Mammary epithelial cell (primary cell): ENCODE measurements at regions of chr10 and their contacts with region 1.

Region 1: GRCh38 chr10:72048450-72049124 is 39.8 kb downstream of the SPOCK2 start:
- DNase-seq: peak; percentile 85
- H3K4me3 ChIP-seq: no peak overlapping the region
- H3K27ac ChIP-seq: no peak overlapping the region
- H3K4me1 ChIP-seq: peaks cover 17% of the 10 kb centered on the region
- H3K27me3 ChIP-seq: no peaks in the 10 kb centered on the region
- CTCF ChIP-seq: peak; percentile 99 to 100

Region 2: DNA sequence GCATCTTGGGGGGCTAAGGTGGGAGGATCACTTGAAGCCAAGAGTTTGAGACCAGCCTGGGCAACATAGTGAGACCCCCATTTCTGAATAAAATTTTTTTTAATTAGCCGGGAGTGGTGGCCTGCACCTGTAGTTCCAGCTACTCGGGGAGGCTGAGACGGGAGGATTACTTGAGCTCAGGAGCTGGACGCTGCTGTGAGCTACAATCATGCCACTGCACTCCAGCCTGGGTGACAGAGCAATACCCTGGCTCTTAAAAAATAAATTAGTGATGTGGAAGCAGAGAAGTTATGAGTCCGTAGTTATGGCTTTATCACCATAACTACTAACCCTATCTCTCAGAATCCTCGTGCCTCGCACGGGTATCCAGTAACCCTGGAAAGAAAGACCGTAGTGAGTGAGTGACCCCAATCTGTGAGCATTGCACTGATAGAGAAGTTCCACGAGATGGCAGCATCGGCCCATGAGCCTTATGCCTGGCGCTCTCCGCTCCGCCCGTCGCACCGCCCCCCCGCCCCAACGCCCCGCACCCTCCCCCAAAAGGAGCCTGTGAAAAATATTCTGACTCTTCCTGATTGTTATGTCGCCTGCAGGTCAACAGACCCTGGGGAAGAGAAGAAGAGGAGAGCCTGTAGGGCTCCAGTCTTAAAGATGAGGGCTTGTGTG is 734.4 kb before region 1 on chr10:
- CTCF ChIA-PET with region 1: no interaction called
- dilution Hi-C with region 1: no loop called
- in situ Hi-C with region 1: no loop called
- intact Hi-C with region 1: loop called (anchors 2 kb)
- DNase-seq: no peak
- H3K4me3 ChIP-seq: no peak overlapping the region
- H3K27ac ChIP-seq: no peak overlapping the region
- H3K4me1 ChIP-seq: no peaks in the 10 kb centered on the region
- H3K27me3 ChIP-seq: no peaks in the 10 kb centered on the region
- CTCF ChIP-seq: peak; percentile 67 to 76

Region 3: DNA sequence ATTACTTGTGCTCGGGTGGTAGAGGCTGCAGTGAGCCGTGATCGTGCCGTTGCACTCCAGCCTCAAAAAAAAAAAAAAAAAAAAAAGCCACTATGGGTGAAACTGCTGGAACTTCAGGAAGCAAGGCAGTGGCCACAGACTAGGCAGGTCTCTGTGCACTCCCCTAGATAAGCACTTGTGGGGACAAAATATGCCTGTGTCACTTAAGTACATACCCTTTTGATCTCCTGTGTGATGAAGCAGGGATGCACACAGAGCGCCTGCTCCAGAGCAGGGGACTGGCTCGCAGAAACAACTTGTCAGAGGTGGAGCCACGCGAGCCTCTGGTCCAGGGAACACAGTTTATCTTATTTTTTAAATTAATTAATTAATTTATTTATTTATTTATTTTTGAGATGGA is 154.7 kb before region 1 on chr10:
- CTCF ChIA-PET with region 1: interaction called, 20 read pairs
- dilution Hi-C with region 1: no loop called
- in situ Hi-C with region 1: loop called in 1 of 2 experiments (anchors 10 kb)
- intact Hi-C with region 1: loop called (anchors 1 kb)
- DNase-seq: no peak
- H3K4me3 ChIP-seq: no peak overlapping the region
- H3K27ac ChIP-seq: no peak overlapping the region
- H3K4me1 ChIP-seq: peaks cover 7% of the 10 kb centered on the region
- H3K27me3 ChIP-seq: no peaks in the 10 kb centered on the region
- CTCF ChIP-seq: no peak

Region 4: GRCh38 chr10:71957546-71958275 is 90.9 kb before region 1 on chr10:
- CTCF ChIA-PET with region 1: interaction called, 10 read pairs
- dilution Hi-C with region 1: no loop called
- in situ Hi-C with region 1: loop called (anchors 5 to 10 kb)
- intact Hi-C with region 1: loop called (anchors 1 kb)
- DNase-seq: no peak
- H3K4me3 ChIP-seq: no peak overlapping the region
- H3K27ac ChIP-seq: no peak overlapping the region
- H3K4me1 ChIP-seq: peaks cover 13% of the 10 kb centered on the region
- H3K27me3 ChIP-seq: no peaks in the 10 kb centered on the region
- CTCF ChIP-seq: no peak

Region 5: GRCh38 chr10:71974489-71975021 is 74.0 kb before region 1 on chr10:
- CTCF ChIA-PET with region 1: interaction called, 3 read pairs
- dilution Hi-C with region 1: no loop called
- in situ Hi-C with region 1: no loop called
- intact Hi-C with region 1: loop called (anchors 1 kb)
- DNase-seq: peak; percentile 92
- H3K4me3 ChIP-seq: no peak overlapping the region
- H3K27ac ChIP-seq: peak overlapping the region; percentile 88
- H3K4me1 ChIP-seq: peaks cover 96% of the 10 kb centered on the region
- H3K27me3 ChIP-seq: no peaks in the 10 kb centered on the region
- CTCF ChIP-seq: no peak

Region 6: DNA sequence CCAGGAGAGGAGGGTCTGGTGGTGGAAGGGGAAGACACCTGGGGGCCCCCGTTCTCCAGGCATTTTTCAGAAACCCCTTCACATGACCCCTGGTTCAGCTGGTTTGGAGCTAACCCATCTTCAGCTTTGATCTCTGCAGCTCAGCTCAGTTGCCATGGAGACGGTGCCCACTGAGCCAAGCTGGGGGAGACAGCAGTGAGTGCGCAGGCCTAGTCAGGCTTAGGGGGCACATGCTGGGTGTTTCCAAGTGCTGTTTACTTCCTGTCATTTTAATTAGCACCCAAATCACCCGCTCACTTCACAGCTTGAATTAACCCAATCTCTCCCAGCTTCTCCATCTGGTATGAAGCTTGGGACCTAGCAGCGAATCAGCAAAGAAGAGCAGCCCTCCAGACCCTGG is 30.8 kb after region 1 on chr10:
- CTCF ChIA-PET with region 1: no interaction called
- dilution Hi-C with region 1: no loop called
- in situ Hi-C with region 1: no loop called
- intact Hi-C with region 1: no loop called
- DNase-seq: no peak
- H3K4me3 ChIP-seq: no peak overlapping the region
- H3K27ac ChIP-seq: no peak overlapping the region
- H3K4me1 ChIP-seq: peaks cover 22% of the 10 kb centered on the region
- H3K27me3 ChIP-seq: no peaks in the 10 kb centered on the region
- CTCF ChIP-seq: no peak

Region 7: DNA sequence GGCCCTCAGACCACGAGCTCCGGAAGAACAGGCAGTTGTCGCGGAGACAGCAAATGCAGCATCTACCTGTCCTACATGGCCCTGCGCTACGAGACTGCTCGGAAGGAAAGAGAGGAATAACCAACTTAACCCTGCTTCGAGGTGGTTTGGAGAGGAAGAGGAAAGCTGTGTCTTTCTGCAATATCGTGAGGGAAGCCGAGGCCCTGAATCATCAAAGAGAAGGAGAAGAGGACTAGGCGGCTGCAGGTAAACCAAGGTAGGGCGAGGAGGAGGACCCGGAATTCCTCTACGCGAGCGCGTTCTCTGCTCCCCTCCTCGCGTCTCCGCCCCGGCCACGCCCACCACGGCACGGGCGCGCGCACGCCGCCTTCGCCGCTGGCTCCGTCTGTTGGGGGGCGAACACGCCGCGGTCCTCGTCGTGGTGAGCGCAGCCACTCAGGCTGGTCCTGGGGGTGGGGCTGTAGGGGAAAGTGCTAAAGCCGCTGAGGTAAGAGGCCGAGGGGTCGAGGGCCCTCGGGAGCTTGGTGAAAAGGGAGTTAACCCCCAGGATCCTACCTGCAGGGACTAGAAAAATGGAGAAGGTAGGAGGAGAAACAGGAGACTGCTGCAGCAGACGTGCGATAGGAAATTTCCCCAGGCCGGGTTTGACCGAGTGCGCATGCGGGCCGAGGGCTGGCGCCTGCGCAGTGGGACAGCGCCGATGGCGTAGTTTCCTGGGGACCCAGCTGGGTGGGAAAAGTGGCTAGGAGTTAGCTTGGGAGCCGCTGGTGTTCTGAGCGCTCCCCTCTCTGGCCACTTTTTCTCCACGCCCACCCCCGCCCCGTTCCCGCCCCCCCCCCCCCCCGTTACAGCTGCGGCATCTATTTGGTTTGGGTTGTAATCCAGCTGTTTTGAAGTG is 167.3 kb after region 1 on chr10 and contains the starts of genes ANAPC16 and ASCC1:
- CTCF ChIA-PET with region 1: no interaction called
- dilution Hi-C with region 1: no loop called
- in situ Hi-C with region 1: loop called in 1 of 2 experiments (anchors 10 kb)
- intact Hi-C with region 1: no loop called
- DNase-seq: peak; percentile 93
- H3K4me3 ChIP-seq: peak within 1 kb of the TSS; percentile 74 to 89 (median 87)
- H3K27ac ChIP-seq: peak within 1 kb of the TSS; percentile 91
- H3K4me1 ChIP-seq: peaks cover 13% of the 10 kb centered on the region
- H3K27me3 ChIP-seq: no peaks in the 10 kb centered on the region
- CTCF ChIP-seq: no peak
- total RNA-seq, gene ANAPC16: 66.4 to 87.2 TPM
- total RNA-seq, gene ASCC1: 40.2 to 54.5 TPM

Region 8: GRCh38 chr10:72273410-72274212 is 225.0 kb after region 1 on chr10 and contains the start of gene DDIT4:
- CTCF ChIA-PET with region 1: no interaction called
- dilution Hi-C with region 1: no loop called
- in situ Hi-C with region 1: no loop called
- intact Hi-C with region 1: loop called (anchors 1 kb)
- DNase-seq: peak; percentile 99
- H3K4me3 ChIP-seq: peak within 1 kb of the TSS; percentile 59 to 78 (median 66)
- H3K27ac ChIP-seq: peak within 1 kb of the TSS; percentile 93
- H3K4me1 ChIP-seq: peaks cover 27% of the 10 kb centered on the region
- H3K27me3 ChIP-seq: no peaks in the 10 kb centered on the region
- CTCF ChIP-seq: no peak
- total RNA-seq, gene DDIT4: 772 to 1,235 TPM

Region 9: GRCh38 chr10:73495884-73496674 is 1447.5 kb after region 1 on chr10 and contains the start of gene PPP3CB:
- CTCF ChIA-PET with region 1: no interaction called
- dilution Hi-C with region 1: no loop called
- in situ Hi-C with region 1: no loop called
- intact Hi-C with region 1: no loop called
- DNase-seq: peak; percentile 96
- H3K4me3 ChIP-seq: peak within 1 kb of the TSS; percentile 73 to 93 (median 74)
- H3K27ac ChIP-seq: peak within 1 kb of the TSS; percentile 75
- H3K4me1 ChIP-seq: peaks cover 23% of the 10 kb centered on the region
- H3K27me3 ChIP-seq: no peaks in the 10 kb centered on the region
- CTCF ChIP-seq: no peak
- total RNA-seq, gene PPP3CB: 21.2 to 30.9 TPM